Natural killer cell (primary cell): ENCODE measurements at regions of chr6 and their contacts with region 1.

Region 1: DNA sequence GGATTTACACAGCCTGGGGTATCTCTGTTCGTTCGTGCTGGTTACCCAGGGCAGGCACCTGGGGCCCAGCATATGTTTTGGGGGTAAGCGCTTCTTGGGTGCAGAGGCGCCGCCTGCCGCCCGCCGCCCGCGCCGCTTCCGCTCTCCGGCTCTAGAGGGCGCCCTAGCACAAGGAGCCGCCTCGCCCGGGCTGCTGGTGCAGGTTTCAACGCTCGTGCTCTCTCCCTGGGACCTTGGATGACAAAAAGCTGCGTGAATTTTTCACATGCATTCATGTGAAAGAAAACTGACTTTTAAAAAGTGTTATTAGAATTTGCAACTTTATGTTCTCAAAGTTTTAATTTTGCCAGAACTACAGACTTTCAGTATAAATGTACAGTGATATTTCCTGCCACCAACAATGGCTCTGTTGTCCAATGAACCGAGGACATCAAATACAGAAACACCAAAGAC is 32.5 kb downstream of the PRR18 start:
- DNase-seq: peak; percentile 80 to 83
- ATAC-seq: peak; percentile 89 to 99 (median 98)
- H3K4me3 ChIP-seq: no peak overlapping the region
- H3K4me3 Mint-ChIP-seq: peak overlapping the region; percentile 42
- H3K27ac ChIP-seq: no peak overlapping the region
- H3K27ac Mint-ChIP-seq: peak overlapping the region in 1 of 2 donors; percentile 47
- H3K4me1 ChIP-seq: peaks cover 2% of the 10 kb centered on the region
- H3K4me1 Mint-ChIP-seq: peaks cover 8 to 9% of the 10 kb centered on the region in 2 donors
- H3K27me3 ChIP-seq: no peaks in the 10 kb centered on the region
- H3K27me3 Mint-ChIP-seq: peaks cover 9 to 22% of the 10 kb centered on the region in 2 donors
- CTCF ChIP-seq: peak; percentile 99

Region 2: DNA sequence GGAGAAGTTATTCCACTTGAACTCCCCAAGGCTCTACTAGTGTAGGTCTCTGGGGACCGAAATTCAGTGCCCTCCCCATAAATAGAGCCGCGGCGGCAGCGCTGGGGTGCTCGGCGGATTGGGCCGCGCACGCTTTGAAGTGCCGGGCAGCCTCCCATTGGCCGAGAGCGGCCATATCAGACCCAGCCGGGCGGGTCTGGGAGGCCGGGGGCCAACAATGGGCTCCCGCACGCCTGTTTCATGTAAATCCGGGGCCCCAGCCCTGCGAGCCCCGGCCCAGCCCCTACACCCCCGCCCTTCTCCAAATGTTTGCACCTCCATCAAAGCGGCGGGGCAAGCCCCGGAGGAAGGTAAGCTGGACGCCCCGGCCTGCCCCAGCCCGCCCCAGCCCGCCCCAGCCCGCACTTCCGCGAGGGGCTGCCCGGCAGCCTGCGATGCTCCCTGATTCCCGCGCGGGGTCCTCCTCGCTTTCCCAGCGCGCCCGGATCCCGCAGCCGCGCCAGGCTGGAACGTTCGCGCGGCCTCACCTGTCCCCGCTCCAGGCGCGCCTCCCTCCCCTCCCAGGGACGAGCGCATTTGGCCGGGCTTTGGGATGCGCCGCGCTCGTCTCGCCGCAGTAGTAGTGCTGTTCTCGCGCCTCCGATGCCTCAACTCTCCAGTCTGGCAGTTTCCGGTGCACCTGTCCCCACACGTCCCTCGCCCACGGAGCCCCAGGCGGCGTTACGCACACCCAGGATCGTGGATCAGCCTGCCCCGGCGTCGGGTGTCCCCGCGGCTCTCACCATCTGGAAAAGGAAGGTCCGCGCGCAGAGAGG is 107.7 kb before region 1 on chr6 and contains the start of gene TBXT:
- intact Hi-C with region 1: no loop called
- DNase-seq: no peak
- ATAC-seq: no peak
- H3K4me3 ChIP-seq: peak within 1 kb of the TSS; percentile 20
- H3K4me3 Mint-ChIP-seq: peak within 1 kb of the TSS; percentile 64
- H3K27ac ChIP-seq: no peak within 1 kb of the TSS
- H3K27ac Mint-ChIP-seq: no peak within 1 kb of the TSS
- H3K4me1 ChIP-seq: peaks cover 25% of the 10 kb centered on the region
- H3K4me1 Mint-ChIP-seq: peaks cover 7% of the 10 kb centered on the region in 2 donors
- H3K27me3 ChIP-seq: peaks cover 31% of the 10 kb centered on the region
- H3K27me3 Mint-ChIP-seq: peaks cover 53 to 60% of the 10 kb centered on the region in 2 donors
- CTCF ChIP-seq: no peak
- total RNA-seq, gene TBXT: not detected

Region 3: DNA sequence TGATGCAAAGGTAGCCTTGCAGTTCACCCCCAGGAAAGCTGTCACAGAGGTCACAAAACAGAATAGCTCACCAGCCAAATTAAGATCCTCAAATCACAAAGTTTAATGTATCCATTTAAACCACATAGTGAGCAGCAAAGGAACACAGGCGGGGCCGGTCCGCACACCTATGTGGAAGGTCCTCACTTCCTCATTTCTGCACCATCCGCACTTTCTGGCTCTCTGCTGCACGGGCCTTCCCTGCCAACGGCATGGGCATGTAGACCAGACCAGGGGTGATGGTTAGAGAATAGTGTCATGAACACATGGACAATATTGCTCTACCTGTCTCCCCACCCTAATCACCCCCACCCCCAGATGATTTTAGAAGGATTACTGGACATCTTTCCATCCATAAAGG is 96.0 kb before region 1 on chr6:
- intact Hi-C with region 1: no loop called
- DNase-seq: no peak
- ATAC-seq: no peak
- H3K4me3 ChIP-seq: no peak overlapping the region
- H3K4me3 Mint-ChIP-seq: no peak overlapping the region
- H3K27ac ChIP-seq: no peak overlapping the region
- H3K27ac Mint-ChIP-seq: no peak overlapping the region
- H3K4me1 ChIP-seq: no peaks in the 10 kb centered on the region
- H3K4me1 Mint-ChIP-seq: no peaks in the 10 kb centered on the region
- H3K27me3 ChIP-seq: peaks cover 2% of the 10 kb centered on the region
- H3K27me3 Mint-ChIP-seq: peaks cover 16 to 27% of the 10 kb centered on the region in 2 donors
- CTCF ChIP-seq: no peak

Region 4: GRCh38 chr6:166237617-166238016 is 38.1 kb before region 1 on chr6:
- intact Hi-C with region 1: loop called (anchors 5 kb)
- DNase-seq: no peak
- ATAC-seq: no peak
- H3K4me3 ChIP-seq: no peak overlapping the region
- H3K4me3 Mint-ChIP-seq: no peak overlapping the region
- H3K27ac ChIP-seq: no peak overlapping the region
- H3K27ac Mint-ChIP-seq: no peak overlapping the region
- H3K4me1 ChIP-seq: peaks cover 30% of the 10 kb centered on the region
- H3K4me1 Mint-ChIP-seq: peaks cover 13 to 17% of the 10 kb centered on the region in 2 donors
- H3K27me3 ChIP-seq: peaks cover 4% of the 10 kb centered on the region
- H3K27me3 Mint-ChIP-seq: peaks cover 42 to 54% of the 10 kb centered on the region in 2 donors
- CTCF ChIP-seq: no peak

Region 5: DNA sequence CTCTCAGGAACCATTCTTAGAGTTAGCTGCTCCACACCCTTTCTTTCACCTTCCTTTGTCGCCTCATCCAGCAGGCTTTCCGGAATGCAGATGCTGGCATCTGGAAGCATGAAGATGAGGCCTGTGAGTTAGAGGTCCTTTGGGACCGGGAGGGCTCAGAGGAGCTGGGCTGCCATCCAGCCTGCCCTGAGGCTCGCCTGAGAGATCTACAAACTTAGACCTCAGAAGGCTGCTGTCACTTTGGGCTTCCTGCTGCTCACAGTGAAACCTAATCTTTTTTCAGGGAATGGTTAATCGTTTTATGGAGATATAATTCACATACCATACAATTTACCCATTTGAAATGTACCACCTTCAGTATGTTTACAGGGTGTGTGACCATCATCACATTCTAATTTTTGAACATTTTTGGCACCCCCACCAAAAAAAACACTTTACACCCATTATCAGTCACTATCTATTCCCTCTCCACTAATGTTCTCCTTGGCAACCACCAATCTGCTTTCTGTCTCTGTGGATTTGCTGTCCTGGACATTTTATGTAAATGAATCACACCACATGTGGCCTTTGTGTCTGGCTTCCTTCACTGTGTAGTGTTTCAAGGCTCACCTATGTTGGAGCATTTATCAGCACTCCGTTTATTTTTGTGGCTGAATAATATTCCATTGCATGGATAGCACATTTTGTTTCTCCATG is 127.0 kb after region 1 on chr6:
- intact Hi-C with region 1: loop called (anchors 1 kb)
- DNase-seq: no peak
- ATAC-seq: no peak
- H3K4me3 ChIP-seq: no peak overlapping the region
- H3K4me3 Mint-ChIP-seq: no peak overlapping the region
- H3K27ac ChIP-seq: no peak overlapping the region
- H3K27ac Mint-ChIP-seq: no peak overlapping the region
- H3K4me1 ChIP-seq: peaks cover 5% of the 10 kb centered on the region
- H3K4me1 Mint-ChIP-seq: peaks cover 0 to 16% of the 10 kb centered on the region in 2 donors
- H3K27me3 ChIP-seq: no peaks in the 10 kb centered on the region
- H3K27me3 Mint-ChIP-seq: peaks cover 6 to 11% of the 10 kb centered on the region in 2 donors
- CTCF ChIP-seq: no peak

Region 6: GRCh38 chr6:166488076-166488685 is 212.4 kb after region 1 on chr6:
- intact Hi-C with region 1: loop called (anchors 10 kb)
- DNase-seq: peak; percentile 61 to 95
- ATAC-seq: peak; percentile 91 to 94 (median 94)
- H3K4me3 ChIP-seq: peak overlapping the region; percentile 11
- H3K4me3 Mint-ChIP-seq: peak overlapping the region; percentile 84
- H3K27ac ChIP-seq: peak overlapping the region; percentile 78
- H3K27ac Mint-ChIP-seq: peak overlapping the region; percentile 92 to 93
- H3K4me1 ChIP-seq: peaks cover 19% of the 10 kb centered on the region
- H3K4me1 Mint-ChIP-seq: peaks cover 23 to 28% of the 10 kb centered on the region in 2 donors
- H3K27me3 ChIP-seq: no peaks in the 10 kb centered on the region
- H3K27me3 Mint-ChIP-seq: no peaks in the 10 kb centered on the region
- CTCF ChIP-seq: no peak